ENCODE measurements at regions of chr14 and their contacts with region 1.

Region 1: GRCh38 chr14:23057757-23058653 is 685 bp upstream of the CDH24 start:
- DNase-seq: peak; percentile 96
- ATAC-seq: peak; percentile 66
- H3K4me3 Mint-ChIP-seq: peak overlapping the region; percentile 83
- H3K27ac Mint-ChIP-seq: peak overlapping the region; percentile 91
- H3K4me1 Mint-ChIP-seq: peaks cover 12% of the 10 kb centered on the region
- H3K27me3 Mint-ChIP-seq: peaks cover 5% of the 10 kb centered on the region; the same call in 1 of the 2 replicates
- CTCF ChIP-seq: peak; percentile 97

Region 2: GRCh38 chr14:22929104-22929847 is 128.7 kb before region 1 on chr14 and contains the start of gene PRMT5:
- CTCF ChIA-PET with region 1: interaction called, 21 read pairs
- POLR2A ChIA-PET with region 1: interaction called, 7 read pairs
- DNase-seq: peak; percentile 97
- ATAC-seq: peak; percentile 96
- H3K4me3 Mint-ChIP-seq: no peak within 1 kb of the TSS
- H3K27ac Mint-ChIP-seq: no peak within 1 kb of the TSS; the same call in 1 of the 2 replicates
- H3K4me1 Mint-ChIP-seq: peaks cover 7% of the 10 kb centered on the region
- H3K27me3 Mint-ChIP-seq: no peaks in the 10 kb centered on the region
- CTCF ChIP-seq: no peak
- total RNA-seq, gene PRMT5: 119 to 124 TPM (median 123 TPM) in 3 replicates

Region 3: GRCh38 chr14:22955702-22956569 is 102.1 kb before region 1 on chr14:
- CTCF ChIA-PET with region 1: interaction called, 11 read pairs
- POLR2A ChIA-PET with region 1: interaction called, 3 read pairs
- DNase-seq: no peak
- ATAC-seq: no peak
- H3K4me3 Mint-ChIP-seq: peak overlapping the region; percentile 91
- H3K27ac Mint-ChIP-seq: peak overlapping the region; percentile 94
- H3K4me1 Mint-ChIP-seq: peaks cover 20% of the 10 kb centered on the region
- H3K27me3 Mint-ChIP-seq: no peaks in the 10 kb centered on the region
- CTCF ChIP-seq: no peak

Region 4: GRCh38 chr14:23006544-23007419 is 51.2 kb before region 1 on chr14:
- CTCF ChIA-PET with region 1: interaction called, 40 read pairs
- POLR2A ChIA-PET with region 1: interaction called, 8 read pairs
- DNase-seq: peak; percentile 96
- ATAC-seq: peak; percentile 97
- H3K4me3 Mint-ChIP-seq: peak overlapping the region; percentile 91
- H3K27ac Mint-ChIP-seq: peak overlapping the region; percentile 100
- H3K4me1 Mint-ChIP-seq: peaks cover 31% of the 10 kb centered on the region
- H3K27me3 Mint-ChIP-seq: no peaks in the 10 kb centered on the region
- CTCF ChIP-seq: no peak

Region 5: GRCh38 chr14:23076785-23077408 is 18.9 kb after region 1 on chr14:
- CTCF ChIA-PET with region 1: interaction called, 49 read pairs
- POLR2A ChIA-PET with region 1: interaction called, 6 read pairs
- DNase-seq: no peak
- ATAC-seq: peak; percentile 59
- H3K4me3 Mint-ChIP-seq: no peak overlapping the region
- H3K27ac Mint-ChIP-seq: no peak overlapping the region
- H3K4me1 Mint-ChIP-seq: peaks cover 12% of the 10 kb centered on the region
- H3K27me3 Mint-ChIP-seq: no peaks in the 10 kb centered on the region
- CTCF ChIP-seq: peak; percentile 45